CD8-positive, alpha-beta T cell (primary cell): ENCODE measurements at regions of chr1 and their contacts with region 1.

Region 1: GRCh38 chr1:151968058-151968457 is 25.6 kb downstream of the S100A10 start:
- DNase-seq: peak in 7 of 9 experiments; percentile 42 to 85 (median 59)
- ATAC-seq: peak; percentile 99
- H3K4me3 ChIP-seq: no peak overlapping the region
- H3K4me3 Mint-ChIP-seq: no peak overlapping the region
- H3K27ac ChIP-seq: no peak overlapping the region
- H3K27ac Mint-ChIP-seq: no peak overlapping the region
- H3K4me1 ChIP-seq: peaks cover 5% of the 10 kb centered on the region
- H3K4me1 Mint-ChIP-seq: peaks cover 4% of the 10 kb centered on the region
- H3K27me3 ChIP-seq: no peaks in the 10 kb centered on the region
- H3K27me3 Mint-ChIP-seq: no peaks in the 10 kb centered on the region
- CTCF ChIP-seq: peak; percentile 87

Region 2: DNA sequence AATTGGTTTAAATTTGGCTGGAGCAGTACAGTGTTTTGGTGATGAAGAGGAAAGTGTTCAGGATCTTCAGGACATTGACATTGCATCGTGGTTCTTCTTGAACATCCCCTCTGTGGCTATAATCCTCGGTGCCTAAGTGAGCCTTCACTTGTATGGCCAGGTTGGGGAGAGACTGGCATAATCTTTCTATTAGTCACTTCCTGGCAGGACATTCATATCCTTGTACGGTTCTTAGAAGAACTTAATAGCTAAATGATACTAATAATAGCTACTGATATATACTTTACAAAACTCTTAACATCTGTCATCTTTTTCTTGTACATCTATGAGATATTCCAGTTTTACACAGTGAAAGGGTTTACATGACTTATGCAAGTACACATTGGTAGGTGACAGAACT is 287.2 kb before region 1 on chr1:
- CTCF ChIA-PET with region 1: no interaction called
- POLR2A ChIA-PET with region 1: no interaction called
- intact Hi-C with region 1: no loop called
- DNase-seq: no peak
- ATAC-seq: no peak
- H3K4me3 ChIP-seq: no peak overlapping the region
- H3K4me3 Mint-ChIP-seq: no peak overlapping the region
- H3K27ac ChIP-seq: no peak overlapping the region
- H3K27ac Mint-ChIP-seq: no peak overlapping the region
- H3K4me1 ChIP-seq: no peaks in the 10 kb centered on the region
- H3K4me1 Mint-ChIP-seq: no peaks in the 10 kb centered on the region
- H3K27me3 ChIP-seq: no peaks in the 10 kb centered on the region
- H3K27me3 Mint-ChIP-seq: no peaks in the 10 kb centered on the region
- CTCF ChIP-seq: no peak

Region 3: GRCh38 chr1:151888972-151889570 is 79.0 kb before region 1 on chr1:
- CTCF ChIA-PET with region 1: interaction called, 14 read pairs
- POLR2A ChIA-PET with region 1: no interaction called
- intact Hi-C with region 1: loop called (anchors 1 kb)
- DNase-seq: peak in 2 of 9 experiments; percentile 48 to 58
- ATAC-seq: peak; percentile 69
- H3K4me3 ChIP-seq: no peak overlapping the region
- H3K4me3 Mint-ChIP-seq: no peak overlapping the region
- H3K27ac ChIP-seq: no peak overlapping the region
- H3K27ac Mint-ChIP-seq: peak overlapping the region; percentile 19
- H3K4me1 ChIP-seq: peaks cover 13% of the 10 kb centered on the region
- H3K4me1 Mint-ChIP-seq: peaks cover 24% of the 10 kb centered on the region
- H3K27me3 ChIP-seq: no peaks in the 10 kb centered on the region
- H3K27me3 Mint-ChIP-seq: no peaks in the 10 kb centered on the region
- CTCF ChIP-seq: peak; percentile 53

Region 4: GRCh38 chr1:151934048-151934493 is 34.0 kb before region 1 on chr1:
- CTCF ChIA-PET with region 1: interaction called, 31 read pairs
- POLR2A ChIA-PET with region 1: no interaction called
- intact Hi-C with region 1: loop called (anchors 1 kb)
- DNase-seq: peak; percentile 10 to 81 (median 38)
- ATAC-seq: peak; percentile 78
- H3K4me3 ChIP-seq: no peak overlapping the region
- H3K4me3 Mint-ChIP-seq: no peak overlapping the region
- H3K27ac ChIP-seq: no peak overlapping the region
- H3K27ac Mint-ChIP-seq: no peak overlapping the region
- H3K4me1 ChIP-seq: peaks cover 3% of the 10 kb centered on the region
- H3K4me1 Mint-ChIP-seq: peaks cover 2% of the 10 kb centered on the region
- H3K27me3 ChIP-seq: no peaks in the 10 kb centered on the region
- H3K27me3 Mint-ChIP-seq: no peaks in the 10 kb centered on the region
- CTCF ChIP-seq: peak; percentile 83

Region 5: DNA sequence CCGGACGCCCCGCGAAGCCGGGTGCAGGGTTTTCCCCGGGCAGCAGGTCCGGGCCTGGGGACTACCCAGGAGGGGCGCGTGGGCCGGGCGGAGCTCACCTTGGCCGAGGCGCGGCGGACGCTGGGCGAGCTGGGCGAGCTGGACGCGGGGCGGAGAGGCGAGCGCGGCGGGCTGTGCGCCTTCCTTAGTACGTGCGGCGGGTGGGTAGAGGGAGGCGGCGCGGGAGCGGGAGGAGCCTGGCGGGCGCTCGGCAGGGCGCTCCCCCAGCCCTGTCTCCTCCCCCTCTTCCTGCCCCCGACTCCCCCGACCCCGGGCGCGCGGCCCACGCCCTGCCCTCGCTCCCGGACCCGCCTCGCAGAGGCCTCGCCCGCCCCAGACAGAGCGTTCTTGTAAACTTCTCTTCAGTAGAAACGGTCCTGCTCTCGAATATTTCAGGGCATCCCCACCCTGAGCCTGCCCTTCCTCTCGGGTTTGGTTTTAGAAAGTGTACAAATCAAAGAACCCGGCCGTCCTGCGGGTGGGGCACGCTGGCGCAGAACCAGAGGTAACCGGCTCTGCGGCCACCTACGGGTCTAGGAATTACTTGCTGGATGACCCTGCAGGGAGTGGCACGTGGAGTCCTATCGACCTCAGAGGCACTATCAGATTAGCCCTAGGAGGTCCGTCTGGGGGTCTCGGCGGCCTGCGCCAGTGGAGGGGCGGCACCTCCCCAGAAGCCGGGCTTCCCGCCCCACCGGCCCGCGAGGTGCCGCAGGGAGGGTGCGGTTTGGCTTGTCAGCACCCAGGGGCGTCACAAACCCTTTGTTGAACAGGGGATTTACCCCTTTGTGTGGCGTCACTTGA is 25.8 kb after region 1 on chr1 and contains the start of gene S100A10:
- CTCF ChIA-PET with region 1: interaction called, 665 read pairs
- POLR2A ChIA-PET with region 1: interaction called, 8 read pairs
- intact Hi-C with region 1: loop called (anchors 1 kb)
- DNase-seq: peak; percentile 58 to 92 (median 82)
- ATAC-seq: peak; percentile 86
- H3K4me3 ChIP-seq: peak within 1 kb of the TSS; percentile 78 to 94
- H3K4me3 Mint-ChIP-seq: peak within 1 kb of the TSS; percentile 98
- H3K27ac ChIP-seq: peak within 1 kb of the TSS; percentile 82 to 91
- H3K27ac Mint-ChIP-seq: peak within 1 kb of the TSS; percentile 97
- H3K4me1 ChIP-seq: peaks cover 48% of the 10 kb centered on the region
- H3K4me1 Mint-ChIP-seq: peaks cover 50% of the 10 kb centered on the region
- H3K27me3 ChIP-seq: no peaks in the 10 kb centered on the region
- H3K27me3 Mint-ChIP-seq: no peaks in the 10 kb centered on the region
- CTCF ChIP-seq: no peak
- total RNA-seq, gene S100A10: 132 to 138 TPM

Region 6: GRCh38 chr1:152013664-152014237 is 45.7 kb after region 1 on chr1:
- CTCF ChIA-PET with region 1: interaction called, 14 read pairs
- POLR2A ChIA-PET with region 1: interaction called, 3 read pairs
- intact Hi-C with region 1: no loop called
- DNase-seq: peak in 5 of 9 experiments; percentile 33 to 55 (median 51)
- ATAC-seq: no peak
- H3K4me3 ChIP-seq: no peak overlapping the region
- H3K4me3 Mint-ChIP-seq: no peak overlapping the region
- H3K27ac ChIP-seq: no peak overlapping the region
- H3K27ac Mint-ChIP-seq: no peak overlapping the region
- H3K4me1 ChIP-seq: no peaks in the 10 kb centered on the region
- H3K4me1 Mint-ChIP-seq: no peaks in the 10 kb centered on the region
- H3K27me3 ChIP-seq: no peaks in the 10 kb centered on the region
- H3K27me3 Mint-ChIP-seq: peaks cover 9% of the 10 kb centered on the region
- CTCF ChIP-seq: no peak